ENCODE measurements at regions of chr3 and their contacts with region 1.

Region 1: GRCh38 chr3:156509189-156510174 is 45.4 kb downstream of the SSR3 start:
- DNase-seq: peak in 1 of 2 experiments; percentile 42
- H3K4me3 ChIP-seq: no peak overlapping the region
- H3K4me3 Mint-ChIP-seq: no peak overlapping the region
- H3K27ac Mint-ChIP-seq: no peak overlapping the region
- H3K4me1 ChIP-seq: 0 out of 2 replicates have a peak, but pooled peaks cover 5% of the 10 kb centered on the region
- H3K4me1 Mint-ChIP-seq: no peaks in the 10 kb centered on the region
- H3K27me3 ChIP-seq: no peaks in the 10 kb centered on the region; the same call in 1 of the 2 replicates
- H3K27me3 Mint-ChIP-seq: peaks cover 12% of the 10 kb centered on the region
- CTCF ChIP-seq: peak; percentile 53 to 64

Region 2: GRCh38 chr3:156174229-156174847 is 335.1 kb before region 1 on chr3:
- CTCF ChIA-PET with region 1: interaction called, 15 read pairs
- POLR2A ChIA-PET with region 1: no interaction called
- intact Hi-C with region 1: loop called (anchors 1 kb)
- DNase-seq: peak in 1 of 2 experiments; percentile 10
- H3K4me3 ChIP-seq: no peak overlapping the region
- H3K4me3 Mint-ChIP-seq: no peak overlapping the region
- H3K27ac Mint-ChIP-seq: no peak overlapping the region
- H3K4me1 ChIP-seq: no peaks in the 10 kb centered on the region
- H3K4me1 Mint-ChIP-seq: no peaks in the 10 kb centered on the region
- H3K27me3 ChIP-seq: no peaks in the 10 kb centered on the region
- H3K27me3 Mint-ChIP-seq: peaks cover 6% of the 10 kb centered on the region
- CTCF ChIP-seq: peak in 1 of 2 experiments; percentile 49

Region 3: DNA sequence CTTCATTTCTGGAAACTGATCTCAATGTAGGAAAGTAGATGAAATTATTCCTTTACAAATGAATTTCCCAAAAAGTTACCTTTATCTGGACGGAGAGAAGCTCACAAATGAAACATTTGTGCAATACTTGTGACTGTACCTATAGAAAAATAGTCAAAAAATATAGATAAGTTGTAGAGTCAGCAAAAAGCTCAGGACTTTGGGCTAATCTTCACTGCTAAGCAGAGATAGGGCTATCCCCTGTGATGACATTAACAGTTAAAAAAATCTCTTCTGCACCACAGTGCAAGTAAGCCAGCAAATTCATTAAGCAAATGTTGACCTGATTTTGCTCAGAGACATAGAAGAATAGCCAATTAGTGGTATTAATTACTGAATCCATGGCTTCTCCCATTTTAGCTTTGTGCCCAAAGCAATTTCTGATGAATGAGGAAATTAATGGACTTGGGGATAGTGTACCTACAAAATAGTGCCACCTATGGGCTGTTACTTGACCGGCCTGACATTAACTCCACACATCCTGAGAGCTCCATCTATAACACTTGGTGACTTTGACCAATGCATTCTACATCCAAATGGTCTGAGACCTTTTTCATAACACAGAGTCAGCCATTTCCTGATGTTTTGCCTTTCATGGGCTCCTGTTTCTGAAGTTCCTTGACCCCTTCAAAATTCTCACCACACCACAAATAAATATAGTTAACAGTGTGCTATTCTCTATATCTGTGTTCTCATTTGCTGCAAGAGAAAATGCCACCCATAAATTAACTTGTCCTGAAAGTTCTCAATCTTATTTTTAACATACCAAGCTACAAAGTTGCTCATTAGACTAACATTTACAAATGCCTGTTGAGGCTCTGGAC is 59.5 kb before region 1 on chr3:
- CTCF ChIA-PET with region 1: interaction called, 6 read pairs
- POLR2A ChIA-PET with region 1: no interaction called
- intact Hi-C with region 1: loop called (anchors 1 kb)
- DNase-seq: peak in 1 of 2 experiments; percentile 30
- H3K4me3 ChIP-seq: no peak overlapping the region
- H3K4me3 Mint-ChIP-seq: no peak overlapping the region
- H3K27ac Mint-ChIP-seq: no peak overlapping the region
- H3K4me1 ChIP-seq: no peaks in the 10 kb centered on the region
- H3K4me1 Mint-ChIP-seq: no peaks in the 10 kb centered on the region
- H3K27me3 ChIP-seq: no peaks in the 10 kb centered on the region
- H3K27me3 Mint-ChIP-seq: peaks cover 6% of the 10 kb centered on the region
- CTCF ChIP-seq: peak; percentile 35 to 68

Region 4: GRCh38 chr3:156456771-156457224 is 52.7 kb before region 1 on chr3:
- CTCF ChIA-PET with region 1: interaction called, 3 read pairs
- POLR2A ChIA-PET with region 1: no interaction called
- intact Hi-C with region 1: loop called (anchors 2 kb)
- DNase-seq: peak; percentile 27 to 46
- H3K4me3 ChIP-seq: no peak overlapping the region
- H3K4me3 Mint-ChIP-seq: peak overlapping the region; percentile 58
- H3K27ac Mint-ChIP-seq: peak overlapping the region; percentile 87
- H3K4me1 ChIP-seq: peaks cover 17% of the 10 kb centered on the region
- H3K4me1 Mint-ChIP-seq: peaks cover 6% of the 10 kb centered on the region
- H3K27me3 ChIP-seq: no peaks in the 10 kb centered on the region
- H3K27me3 Mint-ChIP-seq: peaks cover under 1% of the 10 kb centered on the region
- CTCF ChIP-seq: no peak